Ovary (tissue), 10 donors: ENCODE measurements at regions of chr6 and their contacts with region 1.

Region 1: GRCh38 chr6:156564127-156564806 is 212.9 kb upstream of the ARID1B start:
- DNase-seq: peak; percentile 76 to 90 (median 83)
- H3K4me3 ChIP-seq: no peak overlapping the region
- H3K27ac ChIP-seq: no peak overlapping the region
- H3K4me1 ChIP-seq: no peaks in the 10 kb centered on the region
- H3K27me3 ChIP-seq: no peaks in the 10 kb centered on the region
- CTCF ChIP-seq: peak; percentile 83 to 94 (median 90)
- EP300 ChIP-seq: no peak
- POLR2A ChIP-seq: no peak

Region 2: GRCh38 chr6:155412335-155412734 is 1151.9 kb before region 1 on chr6:
- intact Hi-C with region 1: no loop called
- DNase-seq: no peak
- H3K4me3 ChIP-seq: no peak overlapping the region
- H3K27ac ChIP-seq: no peak overlapping the region
- H3K4me1 ChIP-seq: no peaks in the 10 kb centered on the region
- H3K27me3 ChIP-seq: no peaks in the 10 kb centered on the region
- CTCF ChIP-seq: no peak
- EP300 ChIP-seq: no peak
- POLR2A ChIP-seq: no peak

Region 3: GRCh38 chr6:156686995-156687788 is 122.9 kb after region 1 on chr6:
- intact Hi-C with region 1: loop called in 2 of 4 experiments (anchors 5 to 10 kb)
- DNase-seq: peak; percentile 90 to 94 (median 91)
- H3K4me3 ChIP-seq: peak overlapping the region; percentile 79
- H3K27ac ChIP-seq: peak overlapping the region; percentile 88 to 97
- H3K4me1 ChIP-seq: no peaks in the 10 kb centered on the region
- H3K27me3 ChIP-seq: no peaks in the 10 kb centered on the region
- CTCF ChIP-seq: peak in 2 of 3 donors; percentile 5 to 7
- EP300 ChIP-seq: no peak
- POLR2A ChIP-seq: peak; percentile 73

Region 4: DNA sequence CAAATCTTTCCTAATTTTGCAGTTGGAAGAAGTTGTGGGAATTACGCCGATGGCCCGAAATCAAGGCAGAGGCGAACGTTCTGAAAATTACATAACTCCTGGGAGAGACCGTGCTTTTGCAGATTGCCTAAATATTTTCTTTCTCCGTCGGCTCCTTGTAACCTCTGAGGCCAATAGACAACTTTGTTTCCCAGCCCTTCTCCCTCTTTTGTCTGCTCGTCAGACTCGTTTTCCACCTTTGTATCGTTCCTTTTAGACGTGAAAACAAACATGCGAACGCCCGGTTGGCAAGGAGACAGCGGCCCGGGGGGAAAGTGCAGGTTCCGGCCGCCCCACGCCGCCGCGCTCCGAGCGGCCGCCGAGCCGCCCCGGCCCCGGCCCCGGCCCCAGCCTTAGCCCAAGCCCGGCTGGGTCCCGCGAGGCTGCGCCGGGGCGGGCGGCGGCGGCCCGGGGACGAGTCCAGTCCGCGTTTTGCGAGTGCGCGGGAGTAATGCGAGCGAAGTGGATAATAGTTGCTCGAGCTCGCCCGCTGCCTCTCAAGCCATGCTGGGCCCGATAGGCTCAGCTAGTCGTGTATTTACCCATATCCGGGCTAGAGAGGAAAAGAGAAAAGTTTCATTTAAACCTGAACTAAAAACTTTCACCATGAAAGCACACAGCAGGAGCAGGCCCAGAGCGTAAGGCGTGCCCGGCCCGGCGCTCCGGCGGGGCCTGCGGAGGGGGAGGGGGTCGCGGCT is 212.7 kb after region 1 on chr6 and contains the start of gene ARID1B:
- intact Hi-C with region 1: loop called in 1 of 4 experiments (anchors 10 kb)
- DNase-seq: peak; percentile 80 to 88 (median 82)
- H3K4me3 ChIP-seq: peak within 1 kb of the TSS; percentile 79
- H3K27ac ChIP-seq: peak within 1 kb of the TSS; percentile 96 to 100
- H3K4me1 ChIP-seq: peaks cover 2% of the 10 kb centered on the region
- H3K27me3 ChIP-seq: no peaks in the 10 kb centered on the region
- CTCF ChIP-seq: peak in 1 of 3 donors; percentile 11
- EP300 ChIP-seq: no peak
- POLR2A ChIP-seq: peak; percentile 38
- total RNA-seq, gene ARID1B: 96.3 to 144 (median 106) TPM

Region 5: DNA sequence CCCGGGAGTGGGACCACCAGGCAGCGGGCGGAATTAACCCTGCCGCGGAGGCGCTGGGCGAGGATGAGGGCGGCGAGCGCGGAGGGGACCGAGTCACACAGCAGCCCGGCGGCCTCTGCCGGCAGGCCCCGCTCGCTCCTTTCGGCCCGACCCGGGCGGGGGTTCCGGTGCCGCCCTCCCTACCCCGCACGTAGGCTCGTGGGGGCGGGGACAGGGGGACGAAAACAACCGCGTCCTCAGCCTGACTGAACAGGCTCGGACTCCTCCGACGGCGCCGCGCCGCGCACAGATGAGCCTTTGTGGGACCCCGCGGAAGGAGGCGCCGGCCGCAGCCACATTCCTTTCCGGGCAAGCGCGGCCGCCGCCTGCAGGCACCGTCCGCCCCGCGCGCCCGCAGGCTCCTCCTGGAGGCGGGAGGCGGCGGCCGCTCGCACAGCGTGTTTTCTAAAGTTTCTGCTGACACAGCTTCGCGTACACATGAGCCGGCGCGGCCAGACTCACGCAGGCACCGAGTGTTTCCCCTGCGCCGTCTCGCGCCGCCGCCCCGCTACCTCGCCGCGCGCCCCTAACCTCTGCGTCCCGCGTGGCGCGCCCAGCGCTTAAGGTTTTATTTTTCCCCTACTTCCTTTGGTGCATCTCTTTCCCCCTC is 457.2 kb after region 1 on chr6:
- intact Hi-C with region 1: loop called in 1 of 4 experiments (anchors 10 kb)
- DNase-seq: peak; percentile 90 to 93 (median 93)
- H3K4me3 ChIP-seq: peak overlapping the region; percentile 88
- H3K27ac ChIP-seq: peak overlapping the region; percentile 98 to 99
- H3K4me1 ChIP-seq: peaks cover 10% of the 10 kb centered on the region
- H3K27me3 ChIP-seq: no peaks in the 10 kb centered on the region
- CTCF ChIP-seq: peak in 2 of 3 donors; percentile 44 to 57
- EP300 ChIP-seq: no peak
- POLR2A ChIP-seq: peak; percentile 95

Region 6: DNA sequence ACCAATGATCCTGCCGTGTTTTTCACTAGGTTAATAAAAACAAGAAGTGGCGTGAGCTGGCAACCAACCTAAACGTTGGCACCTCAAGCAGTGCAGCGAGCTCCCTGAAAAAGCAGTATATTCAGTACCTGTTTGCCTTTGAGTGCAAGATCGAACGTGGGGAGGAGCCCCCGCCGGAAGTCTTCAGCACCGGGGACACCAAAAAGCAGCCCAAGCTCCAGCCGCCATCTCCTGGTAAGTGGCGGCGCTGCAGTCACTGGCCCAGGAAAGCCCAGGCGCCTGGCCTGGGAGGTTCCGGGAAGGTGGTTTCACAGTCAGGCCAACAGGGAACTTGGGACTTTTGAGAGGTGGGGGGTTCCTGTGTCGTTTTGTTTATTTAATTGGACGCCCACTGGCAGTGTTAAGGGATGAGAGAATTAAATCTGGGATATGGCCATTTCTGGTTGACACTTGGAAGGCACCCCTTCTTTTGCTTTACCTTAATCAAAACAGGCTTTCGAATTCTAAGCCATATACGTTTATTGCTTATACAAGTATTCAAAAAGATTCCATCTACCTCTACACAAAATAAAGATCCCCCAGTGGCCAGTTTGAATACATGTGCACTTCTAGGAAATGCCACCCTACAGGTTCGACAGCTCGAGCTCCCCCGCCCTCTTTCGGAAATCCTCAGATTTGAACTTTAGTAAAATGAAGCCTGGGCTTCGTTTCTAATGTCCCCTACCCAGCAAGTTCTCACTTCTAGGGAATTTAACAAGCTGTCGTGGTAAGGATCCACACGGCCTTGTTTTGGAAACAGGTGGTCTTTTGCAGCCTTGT is 620.1 kb after region 1 on chr6:
- intact Hi-C with region 1: loop called in 3 of 4 experiments (anchors 10 kb)
- DNase-seq: peak; percentile 62 to 84 (median 78)
- H3K4me3 ChIP-seq: no peak overlapping the region
- H3K27ac ChIP-seq: no peak overlapping the region
- H3K4me1 ChIP-seq: no peaks in the 10 kb centered on the region
- H3K27me3 ChIP-seq: no peaks in the 10 kb centered on the region
- CTCF ChIP-seq: peak; percentile 82 to 90 (median 82)
- EP300 ChIP-seq: no peak
- POLR2A ChIP-seq: no peak

Region 7: DNA sequence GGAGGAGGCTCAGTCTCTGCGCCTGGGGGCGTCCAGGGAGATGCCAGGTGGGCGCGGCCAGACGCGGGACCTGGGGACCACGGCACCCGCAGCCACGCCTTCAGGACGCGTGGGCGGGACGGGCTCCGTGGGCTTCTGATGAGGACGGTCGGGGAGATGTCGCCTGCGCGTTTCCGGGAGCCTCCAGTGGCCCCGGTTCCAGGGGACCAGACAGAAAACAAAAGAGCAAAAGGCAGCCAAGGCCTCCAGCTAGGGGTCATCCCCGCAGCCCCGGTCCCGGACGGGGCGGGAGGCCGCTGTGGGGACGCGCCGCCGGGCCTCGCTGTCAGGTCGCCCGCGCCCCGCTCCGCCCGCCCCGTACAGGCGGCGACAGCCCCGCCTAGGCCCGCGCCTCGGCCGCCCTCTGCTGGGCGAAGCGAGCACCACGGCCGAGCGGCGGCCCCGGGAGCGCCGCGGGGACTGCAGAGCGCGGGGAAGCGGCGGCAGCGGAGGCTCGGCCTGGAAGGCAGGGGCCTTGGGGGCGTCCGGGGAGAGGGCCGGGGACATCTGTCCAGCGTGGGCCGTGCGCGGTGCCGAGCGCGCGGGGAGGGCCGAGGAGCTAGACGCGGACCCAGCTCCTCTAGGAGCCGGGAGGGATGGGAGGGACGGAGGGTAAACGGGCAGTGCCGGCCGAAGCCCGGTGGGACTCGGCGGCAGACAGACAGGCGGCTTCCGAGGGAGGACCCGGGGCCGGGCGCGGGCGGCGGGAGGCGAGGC is 710.4 kb after region 1 on chr6:
- intact Hi-C with region 1: loop called in 1 of 4 experiments (anchors 10 kb)
- DNase-seq: peak; percentile 64 to 83 (median 77)
- H3K4me3 ChIP-seq: peak overlapping the region; percentile 43
- H3K27ac ChIP-seq: peak overlapping the region; percentile 44 to 66
- H3K4me1 ChIP-seq: peaks cover 3% of the 10 kb centered on the region
- H3K27me3 ChIP-seq: no peaks in the 10 kb centered on the region
- CTCF ChIP-seq: peak; percentile 24 to 97 (median 97)
- EP300 ChIP-seq: no peak
- POLR2A ChIP-seq: no peak